Activated CD4-positive, alpha-beta T cell treated with anti-CD3 and anti-CD28 coated beads, Interleukin-2, amount 10 ng/mL, durations not matched to agents 24 days and 14 days (primary cell): ENCODE measurements at regions of chr11 and their contacts with region 1.

Region 1: DNA sequence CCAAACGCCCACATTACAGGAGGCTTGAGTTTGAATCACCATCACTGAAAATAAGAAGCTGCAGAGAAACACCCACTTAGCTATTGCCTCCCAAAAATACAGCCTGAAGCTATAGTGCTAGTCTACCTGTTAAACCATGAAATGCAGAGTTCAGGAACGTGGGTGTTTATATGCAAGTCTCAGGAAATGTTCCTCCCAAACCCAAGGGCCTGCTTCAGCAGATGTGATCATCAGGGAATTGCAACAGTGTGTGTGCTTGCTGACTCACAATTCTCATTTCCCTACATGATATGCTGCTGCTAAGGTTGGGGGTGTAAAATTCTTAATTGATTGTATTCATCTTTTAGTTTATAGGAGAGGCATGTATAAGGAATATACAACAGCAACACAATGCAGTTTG is 49.7 kb downstream of the NUP98 start:
- DNase-seq: no peak
- H3K4me3 Mint-ChIP-seq: no peak overlapping the region
- H3K27ac Mint-ChIP-seq: no peak overlapping the region
- H3K4me1 Mint-ChIP-seq: peaks cover 5% of the 10 kb centered on the region
- H3K27me3 Mint-ChIP-seq: no peaks in the 10 kb centered on the region

Region 2: GRCh38 chr11:3786781-3787428 is 39.2 kb after region 1 on chr11:
- intact Hi-C with region 1: loop called (anchors 5 kb)
- DNase-seq: no peak
- H3K4me3 Mint-ChIP-seq: peak overlapping the region; percentile 40
- H3K27ac Mint-ChIP-seq: peak overlapping the region; percentile 30
- H3K4me1 Mint-ChIP-seq: peaks cover 65% of the 10 kb centered on the region
- H3K27me3 Mint-ChIP-seq: no peaks in the 10 kb centered on the region

Region 3: GRCh38 chr11:4809246-4809645 is 1061.6 kb after region 1 on chr11:
- intact Hi-C with region 1: no loop called
- DNase-seq: no peak
- H3K4me3 Mint-ChIP-seq: no peak overlapping the region
- H3K27ac Mint-ChIP-seq: no peak overlapping the region
- H3K4me1 Mint-ChIP-seq: no peaks in the 10 kb centered on the region
- H3K27me3 Mint-ChIP-seq: no peaks in the 10 kb centered on the region